ENCODE measurements at regions of chr4 and their contacts with region 1.

Region 1: DNA sequence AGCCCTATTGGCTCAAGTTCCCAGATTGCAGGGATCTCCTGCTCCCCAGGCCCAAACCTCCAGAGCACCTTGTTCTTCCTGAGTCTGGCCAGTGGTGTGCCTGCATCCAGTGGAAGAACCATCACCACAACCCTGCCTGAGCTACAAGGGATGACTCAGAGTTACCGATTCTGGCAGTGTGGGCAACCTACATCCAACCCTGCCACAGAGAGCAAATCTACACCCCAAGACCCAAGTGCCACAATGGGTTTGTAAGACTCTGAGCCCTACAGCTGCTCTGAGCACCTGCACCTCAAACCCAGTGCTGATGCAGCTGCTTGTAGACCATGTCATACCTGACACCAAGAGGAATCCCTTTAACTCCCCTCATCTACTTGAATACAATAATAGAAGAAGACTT is 110.0 kb downstream of the SOWAHB start:
- DNase-seq: no peak
- H3K4me3 ChIP-seq: no peak overlapping the region
- H3K27me3 ChIP-seq: no peaks in the 10 kb centered on the region
- CTCF ChIP-seq: no peak

Region 2: DNA sequence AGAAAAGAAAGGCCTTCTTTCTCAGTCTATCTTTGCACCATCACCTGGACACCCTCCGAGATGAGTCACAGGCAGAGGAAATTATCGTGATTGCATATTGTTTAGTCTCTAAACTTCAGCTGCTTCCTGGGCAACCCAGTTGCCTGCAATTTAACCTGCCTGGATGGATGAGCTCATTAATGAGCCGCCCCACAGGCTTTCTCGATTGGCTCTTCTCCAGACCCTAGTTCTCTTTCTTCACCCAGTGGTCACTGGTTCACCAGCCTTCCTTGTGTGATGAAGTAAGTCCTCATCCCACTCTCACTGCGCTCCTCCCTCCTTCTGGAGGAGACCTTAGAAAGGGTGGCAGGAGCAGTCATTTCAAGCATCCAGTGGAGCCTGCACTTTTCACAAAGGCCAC is 15.6 kb after region 1 on chr4:
- CTCF ChIA-PET with region 1: interaction called, 12 read pairs
- POLR2A ChIA-PET with region 1: no interaction called
- DNase-seq: peak; percentile 71
- H3K4me3 ChIP-seq: no peak overlapping the region
- H3K27me3 ChIP-seq: no peaks in the 10 kb centered on the region
- CTCF ChIP-seq: no peak

Measured in BJ (cell line).